Esophagus squamous epithelium (tissue), 5 donors: ENCODE measurements at regions of chr11 and their contacts with region 1.

Region 1: DNA sequence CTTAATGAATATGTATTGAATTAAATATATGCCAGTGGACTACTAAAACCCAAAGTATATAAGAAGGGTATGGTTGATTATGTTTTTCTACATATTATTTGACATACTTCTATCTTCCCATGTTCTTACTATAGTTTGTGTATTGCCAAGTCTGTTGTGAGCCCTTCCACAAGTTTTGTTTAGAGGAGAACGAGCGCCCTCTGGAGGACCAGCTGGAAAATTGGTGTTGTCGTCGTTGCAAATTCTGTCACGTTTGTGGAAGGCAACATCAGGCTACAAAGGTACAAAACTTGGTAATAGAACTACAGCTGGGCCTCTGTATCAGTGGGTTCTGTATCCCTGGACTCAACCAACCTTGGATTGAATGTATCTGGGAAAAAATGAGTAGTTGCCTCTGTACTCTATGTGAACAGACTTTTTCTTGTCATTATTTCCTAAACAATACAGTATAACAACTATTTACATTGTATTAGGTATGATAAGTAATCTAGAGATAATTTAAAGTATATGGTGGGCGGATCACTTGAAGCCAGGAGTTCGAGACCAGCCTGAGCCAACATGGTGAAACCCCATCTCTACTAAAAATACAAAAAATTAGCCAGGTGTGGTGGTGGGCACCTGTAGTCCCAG is 38.7 kb upstream of the TTC36 start:
- DNase-seq: no peak
- H3K4me3 ChIP-seq: no peak overlapping the region
- H3K27ac ChIP-seq: no peak overlapping the region
- H3K4me1 ChIP-seq: no peaks in the 10 kb centered on the region
- H3K27me3 ChIP-seq: no peaks in the 10 kb centered on the region
- CTCF ChIP-seq: peak; percentile 53 to 83 (median 79)
- POLR2A ChIP-seq: no peak

Region 2: DNA sequence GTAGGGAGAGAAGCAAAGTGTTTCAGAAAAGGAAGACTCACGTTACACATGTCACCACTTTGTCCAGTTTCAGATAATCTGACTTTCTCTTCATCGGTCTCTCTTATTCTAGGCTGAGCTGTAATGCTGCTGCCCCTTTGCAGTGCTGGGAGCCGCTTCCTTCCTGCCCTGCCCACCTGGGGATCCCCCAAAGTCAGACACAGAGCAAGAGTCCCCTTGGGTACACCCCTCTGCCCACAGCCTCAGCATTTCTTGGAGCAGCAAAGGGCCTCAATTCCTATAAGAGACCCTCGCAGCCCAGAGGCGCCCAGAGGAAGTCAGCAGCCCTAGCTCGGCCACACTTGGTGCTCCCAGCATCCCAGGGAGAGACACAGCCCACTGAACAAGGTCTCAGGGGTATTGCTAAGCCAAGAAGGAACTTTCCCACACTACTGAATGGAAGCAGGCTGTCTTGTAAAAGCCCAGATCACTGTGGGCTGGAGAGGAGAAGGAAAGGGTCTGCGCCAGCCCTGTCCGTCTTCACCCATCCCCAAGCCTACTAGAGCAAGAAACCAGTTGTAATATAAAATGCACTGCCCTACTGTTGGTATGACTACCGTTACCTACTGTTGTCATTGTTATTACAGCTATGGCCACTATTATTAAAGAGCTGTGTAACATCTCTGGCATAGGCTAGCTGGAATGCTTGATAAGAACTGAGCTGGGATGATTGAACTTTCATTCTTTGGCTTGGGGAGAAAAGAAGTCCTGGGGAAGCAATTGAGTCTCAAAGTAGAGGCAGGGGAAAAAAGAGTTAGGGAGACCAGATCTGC is 370.6 kb before region 1 on chr11:
- intact Hi-C with region 1: no loop called
- DNase-seq: no peak
- H3K4me3 ChIP-seq: no peak overlapping the region
- H3K27ac ChIP-seq: no peak overlapping the region
- H3K4me1 ChIP-seq: peaks cover 0 to 7% (median 0%) of the 10 kb centered on the region in 3 donors
- H3K27me3 ChIP-seq: peaks cover 0 to 3% (median 0%) of the 10 kb centered on the region in 4 donors
- CTCF ChIP-seq: no peak
- POLR2A ChIP-seq: no peak

Region 3: DNA sequence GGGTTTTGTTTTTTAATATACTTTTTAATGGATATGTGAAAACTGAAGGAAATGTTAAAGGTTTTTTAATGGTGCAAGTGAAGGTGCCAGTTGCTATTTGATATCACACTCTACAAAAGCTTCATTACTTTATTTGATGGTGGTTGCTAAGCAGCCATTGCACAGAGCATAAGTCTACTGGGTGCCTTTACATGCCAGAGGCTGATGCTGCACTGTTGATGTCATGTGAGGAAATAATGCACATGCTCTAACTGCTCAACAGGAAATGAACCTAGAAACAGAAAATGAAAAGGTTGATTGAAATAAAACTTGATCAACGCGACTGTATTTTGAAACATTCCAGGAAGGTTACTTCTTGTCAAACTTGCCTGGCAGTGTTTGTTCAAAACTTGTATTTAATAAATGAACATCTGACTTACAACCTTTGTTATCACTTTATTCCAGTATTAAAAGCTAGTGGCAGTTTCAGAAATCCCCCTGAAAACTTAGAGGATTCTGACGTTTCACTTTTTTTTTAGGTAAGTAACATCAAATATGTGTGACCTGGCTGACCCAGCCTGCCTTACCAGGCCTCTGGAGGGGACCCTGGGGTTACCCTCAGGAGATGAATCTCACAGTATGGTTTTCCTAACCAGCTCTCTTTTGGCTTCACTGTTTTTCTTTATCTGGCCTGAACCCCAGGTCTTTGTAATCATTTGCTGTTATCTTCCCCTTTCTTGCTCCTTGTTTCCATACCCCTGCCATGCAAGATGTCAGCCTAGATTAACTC is 89.6 kb before region 1 on chr11:
- intact Hi-C with region 1: loop called (anchors 10 kb)
- DNase-seq: no peak
- H3K4me3 ChIP-seq: no peak overlapping the region
- H3K27ac ChIP-seq: peak overlapping the region in 3 of 4 donors; percentile 0 to 63 (median 5)
- H3K4me1 ChIP-seq: peaks cover 17 to 32% (median 19%) of the 10 kb centered on the region in 3 donors
- H3K27me3 ChIP-seq: no peaks in the 10 kb centered on the region
- CTCF ChIP-seq: no peak
- POLR2A ChIP-seq: no peak

Region 4: GRCh38 chr11:118742304-118742703 is 253.7 kb after region 1 on chr11:
- intact Hi-C with region 1: no loop called
- DNase-seq: no peak
- H3K4me3 ChIP-seq: no peak overlapping the region
- H3K27ac ChIP-seq: no peak overlapping the region
- H3K4me1 ChIP-seq: no peaks in the 10 kb centered on the region
- H3K27me3 ChIP-seq: no peaks in the 10 kb centered on the region
- CTCF ChIP-seq: no peak
- POLR2A ChIP-seq: no peak